ENCODE measurements at regions of chr3 and their contacts with region 1.

Region 1: GRCh38 chr3:27880969-27881892 is 159.1 kb upstream of the EOMES start:
- DNase-seq: peak; percentile 26
- H3K4me3 Mint-ChIP-seq: peak overlapping the region; percentile 80
- H3K27ac Mint-ChIP-seq: peak overlapping the region; percentile 76
- H3K4me1 Mint-ChIP-seq: peaks cover 48% of the 10 kb centered on the region
- H3K27me3 Mint-ChIP-seq: no peaks in the 10 kb centered on the region

Region 2: GRCh38 chr3:27752926-27753325 is 128.3 kb before region 1 on chr3:
- intact Hi-C with region 1: loop called (anchors 2 kb)
- DNase-seq: peak; percentile 17
- H3K4me3 Mint-ChIP-seq: peak overlapping the region; percentile 42
- H3K27ac Mint-ChIP-seq: peak overlapping the region; percentile 96
- H3K4me1 Mint-ChIP-seq: peaks cover 35% of the 10 kb centered on the region
- H3K27me3 Mint-ChIP-seq: no peaks in the 10 kb centered on the region

Region 3: GRCh38 chr3:27848826-27849225 is 32.4 kb before region 1 on chr3:
- intact Hi-C with region 1: loop called (anchors 5 kb)
- DNase-seq: no peak
- H3K4me3 Mint-ChIP-seq: no peak overlapping the region
- H3K27ac Mint-ChIP-seq: peak overlapping the region; percentile 73
- H3K4me1 Mint-ChIP-seq: peaks cover 19% of the 10 kb centered on the region
- H3K27me3 Mint-ChIP-seq: no peaks in the 10 kb centered on the region

Region 4: DNA sequence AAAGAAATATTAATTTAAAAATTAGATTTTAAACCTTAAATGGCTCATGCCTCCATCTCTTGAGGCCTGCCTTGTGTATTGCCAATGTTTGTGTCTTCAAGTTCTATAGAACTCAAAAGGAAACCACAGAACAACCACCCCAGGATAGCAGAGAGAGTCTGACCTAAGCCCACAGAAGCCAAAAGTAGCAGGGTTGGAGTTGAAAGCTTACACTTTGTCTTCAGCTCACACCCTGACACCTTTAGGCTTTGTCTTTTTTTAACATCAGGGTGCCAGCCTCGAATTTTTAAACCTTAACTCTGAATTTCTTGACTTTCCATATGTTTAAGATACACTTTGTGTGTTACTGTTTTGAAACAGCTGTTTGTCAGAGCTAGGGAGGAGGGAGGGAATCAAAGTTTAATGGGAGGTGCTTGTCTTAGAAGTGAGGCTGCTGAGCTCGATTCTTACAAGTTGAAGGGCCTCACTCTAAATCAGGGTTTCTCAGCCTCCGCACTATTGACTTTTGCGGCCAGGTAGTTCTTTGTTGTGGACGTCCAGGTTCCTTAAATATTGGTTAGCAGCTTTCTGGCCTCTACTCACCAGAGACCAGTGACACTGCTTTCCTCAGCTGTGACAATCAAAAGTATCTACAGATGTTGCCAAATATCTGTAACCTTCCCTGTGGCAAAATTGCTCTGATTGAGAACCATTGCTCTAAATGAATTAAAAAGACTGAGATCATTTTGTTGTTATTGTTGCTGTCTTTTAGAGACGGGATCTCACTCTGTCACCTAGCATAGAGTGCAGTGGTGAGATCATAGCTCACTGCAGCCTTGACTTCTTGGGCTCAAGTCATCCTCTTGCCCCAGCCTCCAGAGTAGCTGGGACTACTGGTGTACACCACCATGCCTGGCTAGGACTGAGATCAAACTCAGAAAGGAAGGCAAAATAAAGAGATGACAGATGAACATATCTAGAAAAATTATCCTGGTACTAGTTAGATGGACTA is 19.9 kb before region 1 on chr3:
- intact Hi-C with region 1: loop called (anchors 1 kb)
- DNase-seq: peak; percentile 42
- H3K4me3 Mint-ChIP-seq: peak overlapping the region; percentile 47
- H3K27ac Mint-ChIP-seq: peak overlapping the region; percentile 87
- H3K4me1 Mint-ChIP-seq: peaks cover 38% of the 10 kb centered on the region
- H3K27me3 Mint-ChIP-seq: no peaks in the 10 kb centered on the region

Measured in activated T-helper 1 cell treated with anti-CD3 and anti-CD28 coated beads, Interleukin-12 subunit alpha, Interleukin-12 subunit beta, Interleukin-2, Interleukin-4 antibody, amounts not matched to agents 30 ng/mL and 10 ng/mL and 1 ng/mL, durations not matched to agents 14 hours and 24 hours and 36 hours (primary cell).